ENCODE measurements at regions of chr12 and their contacts with region 1.

Region 1: GRCh38 chr12:107317751-107318613 is 224.6 kb upstream of the CRY1 start:
- DNase-seq: peak; percentile 91 to 95
- ATAC-seq: peak; percentile 75 to 90
- H3K4me3 ChIP-seq: peak overlapping the region; percentile 88
- H3K27ac ChIP-seq: peak overlapping the region; percentile 85 to 94
- H3K4me1 ChIP-seq: peaks cover 19% of the 10 kb centered on the region; the same call in 2 of the 3 replicates
- CTCF ChIP-seq: peak; percentile 60
- EP300 ChIP-seq: no peak
- POLR2A ChIP-seq: peak; percentile 86
- RAD21 ChIP-seq: peak; percentile 62 to 68

Region 2: GRCh38 chr12:107304588-107305532 is 13.1 kb before region 1 on chr12:
- CTCF ChIA-PET with region 1: interaction called, 12 read pairs
- POLR2A ChIA-PET with region 1: no interaction called
- DNase-seq: peak in 1 of 2 experiments; percentile 25
- ATAC-seq: no peak
- H3K4me3 ChIP-seq: no peak overlapping the region
- H3K27ac ChIP-seq: no peak overlapping the region
- H3K4me1 ChIP-seq: no peaks in the 10 kb centered on the region
- CTCF ChIP-seq: no peak
- EP300 ChIP-seq: no peak
- POLR2A ChIP-seq: no peak
- RAD21 ChIP-seq: no peak

Region 3: GRCh38 chr12:107328442-107329133 is 10.6 kb after region 1 on chr12:
- CTCF ChIA-PET with region 1: interaction called, 12 read pairs
- POLR2A ChIA-PET with region 1: interaction called, 3 read pairs
- DNase-seq: peak; percentile 31 to 49
- ATAC-seq: peak; percentile 70 to 73
- H3K4me3 ChIP-seq: no peak overlapping the region; the same call in 2 of the 3 replicates
- H3K27ac ChIP-seq: peak overlapping the region; percentile 48 to 82
- H3K4me1 ChIP-seq: peaks cover 82% of the 10 kb centered on the region
- CTCF ChIP-seq: no peak
- EP300 ChIP-seq: no peak
- POLR2A ChIP-seq: no peak
- RAD21 ChIP-seq: no peak

Region 4: DNA sequence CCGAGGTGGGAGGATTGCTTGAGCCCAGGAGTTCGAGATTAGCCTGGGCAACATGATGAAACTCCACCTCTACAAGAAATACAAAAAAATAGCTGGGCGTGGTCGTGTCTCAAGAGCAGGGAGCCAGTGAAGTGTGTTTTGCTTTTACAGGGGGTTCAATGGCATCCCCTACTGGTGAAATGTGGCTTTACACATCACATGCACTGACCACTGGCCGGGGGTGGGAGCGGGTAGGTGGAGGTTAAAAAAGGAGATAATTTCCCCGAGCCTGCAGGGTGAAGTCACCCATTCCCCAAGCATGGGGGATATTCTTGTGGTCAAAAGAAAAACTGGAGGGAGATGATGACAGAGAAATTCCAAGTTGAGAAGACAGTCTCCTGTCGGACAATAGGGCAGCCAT is 304.0 kb after region 1 on chr12:
- CTCF ChIA-PET with region 1: no interaction called
- POLR2A ChIA-PET with region 1: no interaction called
- DNase-seq: peak in 1 of 2 experiments; percentile 47
- ATAC-seq: peak in 1 of 2 experiments; percentile 49; a peak in 1 of 6 replicates
- H3K4me3 ChIP-seq: no peak overlapping the region
- H3K27ac ChIP-seq: no peak overlapping the region
- H3K4me1 ChIP-seq: no peaks in the 10 kb centered on the region
- CTCF ChIP-seq: peak; percentile 48
- EP300 ChIP-seq: no peak
- POLR2A ChIP-seq: no peak
- RAD21 ChIP-seq: peak; percentile 38 to 43; a peak in 4 of 5 replicates

Measured in A549 (cell line).